ENCODE measurements at regions of chr9 and their contacts with region 1.

Region 1: GRCh38 chr9:2620919-2621679 is 488 bp upstream of the VLDLR start:
- DNase-seq: peak; percentile 70 to 90
- H3K4me3 ChIP-seq: peak overlapping the region; percentile 75 to 81
- H3K27ac ChIP-seq: peak overlapping the region; percentile 92 to 94
- H3K4me1 ChIP-seq: peaks cover 0 to 26% (median 7%) of the 10 kb centered on the region in 4 donors
- H3K27me3 ChIP-seq: no peaks in the 10 kb centered on the region
- CTCF ChIP-seq: peak; percentile 10 to 28

Region 2: DNA sequence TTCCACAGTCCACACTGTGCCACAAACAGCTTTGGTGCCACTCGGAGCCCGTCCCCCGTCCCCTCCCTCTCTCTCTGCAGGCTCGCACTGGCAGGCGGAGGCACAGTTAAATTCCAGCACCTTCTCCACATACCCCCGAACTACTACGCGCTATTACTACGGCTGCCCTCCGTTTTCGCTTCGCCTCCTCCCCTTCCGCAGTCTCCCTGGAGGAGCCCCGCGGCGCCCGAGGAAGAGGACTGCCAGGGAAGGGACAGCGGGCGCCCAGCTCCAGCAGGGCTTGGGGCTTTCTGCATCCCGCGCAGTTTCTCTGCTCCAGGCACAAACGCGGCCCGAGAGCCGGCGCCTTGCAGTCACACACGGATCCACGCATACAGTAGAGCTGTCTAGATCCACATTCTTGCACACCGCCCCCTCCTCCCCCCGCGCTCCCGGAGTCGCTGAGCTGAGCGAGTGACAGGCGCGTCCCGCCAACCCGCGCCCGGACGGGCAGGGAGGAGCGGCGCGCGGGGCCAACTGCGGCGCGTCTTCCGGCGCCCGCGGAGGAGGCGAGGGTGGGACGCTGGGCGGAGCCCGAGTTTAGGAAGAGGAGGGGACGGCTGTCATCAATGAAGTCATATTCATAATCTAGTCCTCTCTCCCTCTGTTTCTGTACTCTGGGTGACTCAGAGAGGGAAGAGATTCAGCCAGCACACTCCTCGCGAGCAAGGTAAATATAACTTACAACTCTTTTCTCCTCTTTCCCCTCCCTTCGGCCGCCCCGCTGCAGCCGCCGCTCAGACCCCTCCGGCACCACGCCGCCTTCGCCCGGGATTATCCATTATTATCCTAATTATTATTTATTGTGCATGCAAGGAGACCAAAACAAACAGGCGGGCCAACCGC is 606.2 kb before region 1 on chr9 and contains the start of gene SMARCA2:
- intact Hi-C with region 1: loop called (anchors 10 kb)
- DNase-seq: peak; percentile 98 to 99
- H3K4me3 ChIP-seq: peak within 1 kb of the TSS; percentile 67 to 76
- H3K27ac ChIP-seq: peak within 1 kb of the TSS; percentile 96 to 97
- H3K4me1 ChIP-seq: peaks cover 0 to 31% (median 22%) of the 10 kb centered on the region in 4 donors
- H3K27me3 ChIP-seq: no peaks in the 10 kb centered on the region
- CTCF ChIP-seq: no peak

Region 3: DNA sequence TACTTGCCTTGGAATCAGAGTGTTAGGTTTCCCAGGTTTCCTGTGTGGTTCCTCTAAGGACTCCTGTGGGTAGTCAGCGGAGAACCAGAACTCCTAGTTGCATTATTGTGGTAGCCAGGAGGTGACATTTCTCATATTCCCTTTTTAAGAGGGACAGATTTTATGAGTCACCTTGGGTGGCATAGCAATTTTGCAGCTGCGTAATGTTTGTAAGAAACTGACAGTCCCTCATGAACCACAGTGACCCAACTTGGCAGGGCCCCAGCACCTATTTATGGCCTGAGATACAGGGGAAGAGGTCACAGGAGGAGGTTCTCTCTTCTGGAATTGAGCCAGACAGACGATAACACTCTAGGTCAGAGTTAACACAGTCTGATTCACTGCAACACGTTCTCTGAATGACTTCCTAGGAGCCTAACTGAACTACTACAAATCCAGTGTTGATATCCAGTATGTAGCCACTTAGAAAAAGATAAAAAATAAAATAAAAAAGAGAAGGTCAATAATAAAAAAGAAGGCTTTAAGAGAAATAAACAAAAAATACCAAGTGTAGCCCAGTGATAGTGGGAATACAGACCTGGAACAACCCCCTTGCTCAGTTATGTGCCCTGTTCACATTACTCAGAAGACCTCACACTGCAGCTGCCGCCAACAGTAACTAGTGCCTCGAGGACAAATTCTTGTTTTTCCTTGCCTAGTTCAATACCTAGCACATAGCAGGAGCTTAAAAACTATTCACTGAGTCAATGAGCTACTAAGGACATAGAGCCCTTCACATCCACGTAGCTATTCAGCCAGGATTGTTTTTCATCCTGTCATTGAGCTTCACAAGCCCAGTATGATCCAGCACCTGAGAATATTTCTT is 50.3 kb before region 1 on chr9:
- intact Hi-C with region 1: loop called (anchors 5 kb)
- DNase-seq: peak; percentile 81 to 90
- H3K4me3 ChIP-seq: no peak overlapping the region
- H3K27ac ChIP-seq: peak overlapping the region; percentile 62 to 64
- H3K4me1 ChIP-seq: peaks cover 4 to 44% (median 12%) of the 10 kb centered on the region in 4 donors
- H3K27me3 ChIP-seq: no peaks in the 10 kb centered on the region
- CTCF ChIP-seq: no peak

Region 4: GRCh38 chr9:2837915-2838314 is 216.8 kb after region 1 on chr9:
- intact Hi-C with region 1: loop called (anchors 5 kb)
- DNase-seq: no peak
- H3K4me3 ChIP-seq: peak overlapping the region; percentile 12 to 18
- H3K27ac ChIP-seq: peak overlapping the region; percentile 40 to 52
- H3K4me1 ChIP-seq: peaks cover 0 to 51% (median 21%) of the 10 kb centered on the region in 4 donors
- H3K27me3 ChIP-seq: no peaks in the 10 kb centered on the region
- CTCF ChIP-seq: peak; percentile 33 to 42

Region 5: GRCh38 chr9:3525836-3526164 is 904.7 kb after region 1 on chr9 and contains the start of gene RFX3:
- intact Hi-C with region 1: loop called (anchors 10 kb)
- DNase-seq: peak; percentile 86 to 95
- H3K4me3 ChIP-seq: peak within 1 kb of the TSS; percentile 77 to 80
- H3K27ac ChIP-seq: peak within 1 kb of the TSS; percentile 99 to 100
- H3K4me1 ChIP-seq: peaks cover 0 to 20% (median 6%) of the 10 kb centered on the region in 4 donors
- H3K27me3 ChIP-seq: no peaks in the 10 kb centered on the region
- CTCF ChIP-seq: no peak